Motor neuron (in vitro differentiated cells): ENCODE measurements at regions of chr10 and their contacts with region 1.

Region 1: GRCh38 chr10:48523820-48524758 is 80.8 kb downstream of the ARHGAP22 start:
- ATAC-seq: peak; percentile 71 to 88 (median 82)
- H3K4me3 ChIP-seq: peak overlapping the region; percentile 47 to 71 (median 50)
- H3K27ac ChIP-seq: no peak overlapping the region
- H3K4me1 ChIP-seq: no peaks in the 10 kb centered on the region

Region 2: DNA sequence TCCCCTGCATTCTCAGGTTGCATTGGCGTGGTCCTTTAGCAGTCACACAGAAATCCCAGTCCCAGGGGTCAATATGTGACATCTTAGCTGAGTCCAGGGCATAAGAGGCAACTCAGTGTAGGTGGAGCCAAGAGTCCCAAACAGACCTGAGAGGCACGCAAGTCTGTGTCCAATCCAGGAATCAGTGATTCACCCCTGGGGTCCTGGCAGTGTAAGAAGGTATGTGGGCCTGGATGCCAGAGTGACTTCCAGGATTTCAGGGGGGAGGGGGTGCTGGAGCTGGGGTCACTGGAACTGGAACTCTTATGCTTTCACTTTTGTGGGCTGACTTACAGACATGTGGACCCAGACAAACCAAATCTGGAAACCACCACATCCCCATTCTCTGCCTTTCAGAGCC is 276.4 kb before region 1 on chr10:
- in situ Hi-C with region 1: no loop called
- ATAC-seq: peak in 1 of 8 experiments; percentile 30
- H3K4me3 ChIP-seq: no peak overlapping the region
- H3K27ac ChIP-seq: no peak overlapping the region
- H3K4me1 ChIP-seq: peaks cover 4 to 9% of the 10 kb centered on the region in 2 donors

Region 3: DNA sequence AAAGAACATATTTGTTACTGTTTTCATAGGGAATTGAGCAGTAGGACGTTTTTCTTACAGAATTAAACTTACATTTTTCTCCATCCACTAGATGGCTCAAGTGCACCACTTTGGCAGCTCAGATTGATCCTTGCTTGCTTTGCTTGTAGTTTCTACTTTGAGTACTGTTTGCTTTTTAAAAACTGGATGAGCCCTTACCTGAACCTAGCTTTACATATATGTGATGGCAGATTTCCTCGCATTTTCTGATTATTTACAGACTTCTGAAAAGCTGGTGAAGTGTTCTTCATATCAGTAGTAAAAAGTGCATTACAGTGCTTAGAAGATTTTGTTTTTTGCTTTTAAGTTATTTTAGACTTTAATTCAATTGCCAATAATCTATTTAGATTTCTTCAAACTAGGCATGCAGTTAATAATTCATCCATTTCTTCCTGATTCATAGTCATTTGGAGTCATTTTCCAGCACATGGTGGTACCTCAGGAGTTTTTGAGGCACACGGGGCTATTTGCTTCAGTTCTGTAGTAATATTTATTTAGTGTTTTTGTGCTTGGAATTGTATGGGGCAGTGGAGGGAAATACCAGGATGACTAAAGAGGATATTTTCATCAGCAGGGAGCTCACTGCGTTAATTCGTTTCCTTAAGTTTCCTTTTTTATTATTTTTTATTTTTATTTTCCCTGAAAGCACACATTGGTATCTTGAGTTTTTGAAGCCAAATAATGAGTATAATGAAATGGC is 160.3 kb before region 1 on chr10:
- in situ Hi-C with region 1: loop called in 2 of 9 experiments (anchors 25 kb)
- ATAC-seq: peak in 4 of 8 experiments; percentile 45 to 56 (median 50)
- H3K4me3 ChIP-seq: no peak overlapping the region
- H3K27ac ChIP-seq: no peak overlapping the region
- H3K4me1 ChIP-seq: no peaks in the 10 kb centered on the region